IMR-90 (cell line): ENCODE measurements at regions of chr19 and their contacts with region 1.

Region 1: DNA sequence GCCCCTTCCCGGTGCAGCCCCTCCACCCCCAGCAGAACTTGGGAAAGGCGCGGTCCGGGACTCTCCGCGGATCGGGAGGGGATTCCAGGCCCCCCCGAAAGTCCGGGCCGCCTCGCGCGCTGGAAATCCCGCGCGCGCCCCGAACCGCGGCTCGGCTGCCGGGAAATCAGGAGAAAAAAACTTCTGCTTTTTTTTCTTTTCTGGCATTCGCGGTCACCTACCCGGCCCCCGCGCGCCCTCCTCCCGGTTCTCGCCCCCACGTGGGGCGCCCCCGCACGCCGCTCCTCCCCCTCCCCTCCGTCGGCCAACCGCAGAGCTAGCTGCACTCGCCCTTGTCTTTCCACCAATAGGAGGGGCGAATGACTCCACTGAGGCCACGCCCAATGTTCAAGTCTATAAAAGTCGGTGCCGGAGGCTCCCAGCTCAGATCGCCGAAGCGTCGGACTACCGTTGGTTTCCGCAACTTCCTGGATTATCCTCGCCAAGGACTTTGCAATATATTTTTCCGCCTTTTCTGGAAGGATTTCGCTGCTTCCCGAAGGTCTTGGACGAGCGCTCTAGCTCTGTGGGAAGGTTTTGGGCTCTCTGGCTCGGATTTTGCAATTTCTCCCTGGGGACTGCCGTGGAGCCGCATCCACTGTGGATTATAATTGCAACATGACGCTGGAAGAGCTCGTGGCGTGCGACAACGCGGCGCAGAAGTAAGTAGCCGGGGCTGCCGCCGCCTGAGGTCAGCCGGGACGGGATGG is at the start of gene GADD45B:
- DNase-seq: peak; percentile 97
- ATAC-seq: peak; percentile 66
- H3K4me3 ChIP-seq: peak within 1 kb of the TSS; percentile 84
- H3K27ac ChIP-seq: peak within 1 kb of the TSS; percentile 76
- H3K4me1 ChIP-seq: peaks cover 4% of the 10 kb centered on the region; the same call in 1 of the 2 replicates
- H3K27me3 ChIP-seq: no peaks in the 10 kb centered on the region
- CTCF ChIP-seq: no peak
- POLR2A ChIP-seq: peak; percentile 100
- RAD21 ChIP-seq: peak; percentile 35; the same call in 1 of the 2 replicates
- total RNA-seq, gene GADD45B: 28.1 and 30.1 TPM in 2 replicates

Region 2: GRCh38 chr19:2462635-2463421 is 13.0 kb before region 1 on chr19:
- CTCF ChIA-PET with region 1: interaction called, 3 read pairs
- POLR2A ChIA-PET with region 1: interaction called, 13 read pairs
- dilution Hi-C with region 1: no loop called
- in situ Hi-C with region 1: no loop called
- intact Hi-C with region 1: no loop called
- DNase-seq: peak; percentile 96
- ATAC-seq: peak; percentile 81
- H3K4me3 ChIP-seq: peak overlapping the region; percentile 75; the same call in 1 of the 2 replicates
- H3K27ac ChIP-seq: peak overlapping the region; percentile 67; the same call in 1 of the 2 replicates
- H3K4me1 ChIP-seq: peaks cover 3% of the 10 kb centered on the region; the same call in 1 of the 2 replicates
- H3K27me3 ChIP-seq: no peaks in the 10 kb centered on the region
- CTCF ChIP-seq: no peak
- POLR2A ChIP-seq: no peak
- RAD21 ChIP-seq: no peak

Region 3: GRCh38 chr19:2543463-2544442 is 67.9 kb after region 1 on chr19:
- CTCF ChIA-PET with region 1: interaction called, 3 read pairs
- POLR2A ChIA-PET with region 1: interaction called, 23 read pairs
- dilution Hi-C with region 1: no loop called
- in situ Hi-C with region 1: loop called (anchors 5 kb)
- intact Hi-C with region 1: loop called (anchors 1 kb)
- DNase-seq: peak; percentile 98
- ATAC-seq: peak; percentile 83
- H3K4me3 ChIP-seq: peak overlapping the region; percentile 5; the same call in 1 of the 2 replicates
- H3K27ac ChIP-seq: peak overlapping the region; percentile 92
- H3K4me1 ChIP-seq: peaks cover 33% of the 10 kb centered on the region
- H3K27me3 ChIP-seq: no peaks in the 10 kb centered on the region
- CTCF ChIP-seq: peak; percentile 56
- POLR2A ChIP-seq: no peak
- RAD21 ChIP-seq: peak; percentile 66

Region 4: GRCh38 chr19:2588081-2588777 is 112.4 kb after region 1 on chr19:
- CTCF ChIA-PET with region 1: no interaction called
- POLR2A ChIA-PET with region 1: interaction called, 10 read pairs
- dilution Hi-C with region 1: no loop called
- in situ Hi-C with region 1: no loop called
- intact Hi-C with region 1: no loop called
- DNase-seq: peak; percentile 58
- ATAC-seq: peak; percentile 14; the same call in 1 of the 2 replicates
- H3K4me3 ChIP-seq: no peak overlapping the region
- H3K27ac ChIP-seq: no peak overlapping the region
- H3K4me1 ChIP-seq: peaks cover 5% of the 10 kb centered on the region; the same call in 1 of the 2 replicates
- H3K27me3 ChIP-seq: peaks cover 11% of the 10 kb centered on the region
- CTCF ChIP-seq: no peak
- POLR2A ChIP-seq: no peak
- RAD21 ChIP-seq: no peak

Region 5: DNA sequence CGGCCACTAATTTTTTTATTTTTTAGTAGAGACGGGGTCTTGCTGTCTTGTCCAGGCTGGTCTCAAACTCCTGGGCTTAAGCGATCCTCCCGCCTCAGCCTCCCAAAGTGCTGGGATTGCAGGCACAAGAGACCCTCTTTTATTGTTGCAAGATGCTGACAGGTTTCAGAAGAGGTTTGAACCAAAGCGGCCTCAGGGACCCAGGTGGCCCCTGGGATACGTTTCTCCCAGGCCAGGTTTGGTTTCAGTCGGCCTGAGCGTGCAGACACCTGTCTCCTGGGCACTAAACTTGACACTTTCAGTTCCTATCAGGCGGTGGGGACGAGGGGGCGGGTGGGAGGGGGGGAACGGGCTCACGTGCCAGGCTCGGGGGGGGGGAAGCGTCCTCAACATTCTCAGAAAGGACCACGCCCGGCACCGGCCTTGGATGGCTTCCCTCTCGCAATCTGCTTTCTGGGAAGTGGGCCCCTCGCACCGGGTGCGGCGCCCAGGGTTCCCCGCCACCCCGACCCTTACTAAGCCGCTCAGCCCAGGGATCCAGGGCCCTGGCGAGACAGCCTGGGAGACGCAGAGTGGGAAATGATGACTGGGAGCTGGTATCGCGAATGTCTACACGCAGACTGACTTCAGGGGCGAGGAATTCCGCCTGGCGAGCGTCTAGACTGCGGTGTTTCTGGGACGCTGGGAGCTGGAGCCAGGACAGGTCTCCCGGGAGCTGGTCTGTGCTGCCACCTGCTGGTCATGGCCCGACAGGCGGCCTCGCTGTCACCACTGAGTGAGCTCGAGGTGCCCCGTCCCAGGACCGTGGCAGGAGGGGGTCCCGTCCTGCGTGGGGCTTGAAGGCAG is 135.0 kb after region 1 on chr19:
- CTCF ChIA-PET with region 1: interaction called, 10 read pairs
- POLR2A ChIA-PET with region 1: interaction called, 21 read pairs
- dilution Hi-C with region 1: no loop called
- in situ Hi-C with region 1: loop called (anchors 5 kb)
- intact Hi-C with region 1: loop called (anchors 1 kb)
- DNase-seq: peak; percentile 94
- ATAC-seq: peak; percentile 97
- H3K4me3 ChIP-seq: peak overlapping the region; percentile 21
- H3K27ac ChIP-seq: peak overlapping the region; percentile 8; the same call in 1 of the 2 replicates
- H3K4me1 ChIP-seq: no peaks in the 10 kb centered on the region
- H3K27me3 ChIP-seq: peaks cover 8% of the 10 kb centered on the region
- CTCF ChIP-seq: peak; percentile 99
- POLR2A ChIP-seq: no peak
- RAD21 ChIP-seq: peak; percentile 96

Region 6: GRCh38 chr19:2739602-2740313 is 263.9 kb after region 1 on chr19 and contains the start of gene SLC39A3:
- CTCF ChIA-PET with region 1: no interaction called
- POLR2A ChIA-PET with region 1: no interaction called
- dilution Hi-C with region 1: no loop called
- in situ Hi-C with region 1: no loop called
- intact Hi-C with region 1: loop called (anchors 10 kb)
- DNase-seq: peak; percentile 98
- ATAC-seq: peak; percentile 100
- H3K4me3 ChIP-seq: peak within 1 kb of the TSS; percentile 91
- H3K27ac ChIP-seq: peak within 1 kb of the TSS; percentile 58
- H3K4me1 ChIP-seq: no peaks in the 10 kb centered on the region; the same call in 1 of the 2 replicates
- H3K27me3 ChIP-seq: no peaks in the 10 kb centered on the region
- CTCF ChIP-seq: no peak
- POLR2A ChIP-seq: peak; percentile 36; the same call in 1 of the 2 replicates
- RAD21 ChIP-seq: 0 out of 2 replicates have a peak, but pooled peaks have one; percentile 13
- total RNA-seq, gene SLC39A3: 12.4 and 12.8 TPM in 2 replicates